Prostate gland (tissue), 2 donors: ENCODE measurements at regions of chr11 and their contacts with region 1.

Region 1: DNA sequence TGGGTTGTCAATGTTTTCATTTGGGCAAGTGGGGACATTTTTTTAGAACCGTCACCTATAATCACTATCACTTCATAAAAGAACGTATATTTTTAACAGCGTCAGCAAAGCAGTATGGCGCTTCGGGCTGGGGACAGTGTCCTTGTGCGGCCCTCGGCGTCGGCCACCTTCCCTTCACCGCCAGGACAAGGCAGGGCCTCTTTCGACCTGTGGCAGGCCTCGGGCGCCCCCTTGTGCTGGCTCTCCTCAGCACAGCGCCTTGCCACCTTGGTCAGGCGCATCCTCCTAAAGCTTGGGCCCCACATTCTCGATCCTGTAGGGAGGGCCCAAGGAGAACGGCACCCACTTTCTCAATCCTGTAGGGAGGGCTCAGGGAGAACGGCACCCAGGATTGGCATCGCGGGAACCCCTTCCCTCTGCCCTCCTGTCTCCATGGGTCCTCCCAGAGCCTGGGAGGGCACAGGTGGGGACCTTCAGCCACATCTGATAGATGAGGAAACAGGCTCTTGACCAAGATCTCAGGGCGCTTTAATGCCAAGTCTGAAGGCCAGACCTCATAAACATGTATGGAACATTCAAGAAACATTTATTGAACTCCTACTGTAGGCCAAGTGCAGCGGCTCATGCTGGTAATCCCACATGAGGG is 11.5 kb upstream of the FADD start:
- DNase-seq: peak; percentile 73
- H3K4me3 ChIP-seq: no peak overlapping the region
- H3K27ac ChIP-seq: no peak overlapping the region
- H3K4me1 ChIP-seq: no peaks in the 10 kb centered on the region
- H3K27me3 ChIP-seq: no peaks in the 10 kb centered on the region
- CTCF ChIP-seq: peak; percentile 77 to 97 (median 93)
- POLR2A ChIP-seq: no peak

Region 2: DNA sequence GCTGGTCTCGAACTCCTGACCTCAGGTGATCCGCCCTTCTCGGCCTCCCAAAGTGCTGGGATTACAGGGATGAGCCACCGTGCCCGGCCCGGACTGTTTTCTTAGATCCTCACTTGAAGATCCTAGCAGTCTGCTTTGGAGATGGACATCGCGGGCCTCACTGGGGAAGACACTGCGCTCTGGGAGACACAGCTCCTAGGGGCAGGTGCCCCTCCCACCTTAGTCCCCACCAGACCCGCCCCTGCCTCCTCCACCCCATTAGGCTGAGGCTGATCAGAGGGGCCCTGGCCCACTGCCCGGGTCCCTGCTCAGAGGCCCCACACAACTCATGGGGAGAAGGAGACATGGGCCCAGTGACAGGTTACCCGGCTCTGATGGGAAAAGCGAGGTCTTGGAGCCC is 505.2 kb before region 1 on chr11:
- intact Hi-C with region 1: loop called (anchors 5 kb)
- DNase-seq: no peak
- H3K4me3 ChIP-seq: no peak overlapping the region
- H3K27ac ChIP-seq: no peak overlapping the region
- H3K4me1 ChIP-seq: no peaks in the 10 kb centered on the region
- H3K27me3 ChIP-seq: no peaks in the 10 kb centered on the region
- CTCF ChIP-seq: no peak
- POLR2A ChIP-seq: no peak

Region 3: DNA sequence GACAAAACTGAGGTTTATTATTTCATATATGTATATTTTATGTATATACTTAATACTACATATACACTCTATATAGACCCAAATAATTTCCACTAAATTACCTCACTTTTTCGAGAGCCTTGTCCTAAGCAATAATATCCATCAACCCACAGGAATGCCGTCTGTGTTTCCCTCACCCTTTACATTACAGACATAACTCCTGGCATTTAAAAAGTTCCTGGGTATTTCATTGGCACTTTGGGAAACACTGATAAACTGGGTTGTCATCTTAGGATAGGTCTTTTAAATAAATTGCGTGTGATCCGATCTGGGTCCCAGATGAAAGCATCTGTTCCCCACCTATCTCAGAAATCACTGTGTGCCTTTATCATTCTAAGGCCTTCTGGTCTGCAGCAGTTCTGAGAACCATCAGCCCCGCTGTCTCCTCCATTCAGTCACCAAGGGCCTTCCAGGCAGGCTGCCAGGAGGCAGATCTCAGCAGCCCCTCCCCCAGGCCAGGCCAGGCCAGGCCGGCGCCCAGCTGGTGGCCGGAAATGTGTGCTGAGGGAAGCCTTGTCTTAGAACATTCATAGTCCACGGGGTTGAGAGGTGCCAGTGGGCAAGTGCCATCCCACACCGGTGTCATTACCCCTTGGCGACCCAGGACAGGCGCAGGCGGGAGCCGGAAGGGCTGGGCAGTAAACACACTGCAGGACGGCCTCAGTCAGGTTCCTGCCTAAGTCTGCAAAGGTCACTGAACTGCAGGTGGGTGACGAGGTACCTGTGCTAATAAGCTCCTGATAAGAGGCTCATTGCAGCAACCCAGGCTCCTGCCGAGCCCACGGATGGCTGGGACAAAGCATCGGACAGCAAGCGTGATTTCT is 491.1 kb before region 1 on chr11:
- intact Hi-C with region 1: loop called (anchors 5 kb)
- DNase-seq: no peak
- H3K4me3 ChIP-seq: no peak overlapping the region
- H3K27ac ChIP-seq: no peak overlapping the region
- H3K4me1 ChIP-seq: peaks cover 7% of the 10 kb centered on the region
- H3K27me3 ChIP-seq: peaks cover 36% of the 10 kb centered on the region
- CTCF ChIP-seq: no peak
- POLR2A ChIP-seq: no peak

Region 4: DNA sequence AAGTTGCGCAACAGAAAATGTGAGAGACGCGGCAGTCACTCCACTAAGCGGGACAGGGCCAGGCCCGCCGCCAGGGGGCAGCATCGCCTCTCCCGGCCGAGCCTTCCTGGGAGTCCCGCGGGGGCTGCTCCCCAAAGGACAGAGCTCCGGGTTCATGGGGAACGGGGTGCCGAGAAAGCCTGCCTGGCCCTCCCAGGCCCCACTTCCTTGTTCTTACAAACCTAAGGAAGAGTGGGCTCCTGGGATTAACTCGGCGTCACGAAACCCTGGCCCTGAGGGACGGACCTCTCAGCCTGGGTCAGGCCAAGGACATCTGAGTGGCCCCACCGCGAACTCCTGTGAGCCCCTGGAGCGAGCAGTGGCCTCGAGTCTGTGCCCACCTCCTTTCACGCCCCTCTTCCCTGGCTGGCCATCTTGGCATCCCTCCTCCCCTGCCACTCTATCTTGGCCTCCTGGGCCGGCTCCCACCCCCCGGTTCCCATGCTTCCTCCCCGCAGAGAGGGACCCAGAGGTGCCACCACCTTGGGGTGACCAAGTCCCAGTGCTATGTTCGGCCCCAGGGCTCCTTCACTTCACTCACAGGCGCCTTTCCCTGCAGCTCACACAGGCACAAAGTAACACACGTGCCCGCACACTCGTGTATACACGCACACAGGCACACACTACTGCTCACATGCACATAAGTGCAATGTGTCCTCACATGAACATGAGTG is 272.5 kb before region 1 on chr11:
- intact Hi-C with region 1: loop called (anchors 2 kb)
- DNase-seq: peak; percentile 58
- H3K4me3 ChIP-seq: no peak overlapping the region
- H3K27ac ChIP-seq: no peak overlapping the region
- H3K4me1 ChIP-seq: no peaks in the 10 kb centered on the region
- H3K27me3 ChIP-seq: no peaks in the 10 kb centered on the region
- CTCF ChIP-seq: peak; percentile 90 to 95 (median 93)
- POLR2A ChIP-seq: no peak

Region 5: DNA sequence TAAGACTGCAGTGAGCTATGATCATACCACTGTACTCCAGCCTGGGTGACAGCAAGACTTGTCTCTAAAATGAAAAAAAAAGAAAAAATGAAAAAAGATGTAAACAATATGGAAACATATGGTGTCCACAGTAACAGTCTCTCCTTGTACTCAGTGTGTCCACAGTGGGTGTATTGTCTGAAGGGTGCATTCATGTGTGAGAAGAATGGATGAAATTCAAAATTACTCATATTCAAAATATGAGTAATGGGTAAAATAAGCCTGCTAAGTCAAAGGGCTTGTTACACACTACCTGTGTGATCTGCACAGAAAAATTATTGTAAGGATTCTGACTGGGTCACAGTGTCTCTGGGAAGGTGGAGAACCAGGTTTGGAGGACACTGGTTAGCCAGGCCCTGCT is 105.7 kb after region 1 on chr11:
- intact Hi-C with region 1: no loop called
- DNase-seq: no peak
- H3K4me3 ChIP-seq: no peak overlapping the region
- H3K27ac ChIP-seq: no peak overlapping the region
- H3K4me1 ChIP-seq: no peaks in the 10 kb centered on the region
- H3K27me3 ChIP-seq: no peaks in the 10 kb centered on the region
- CTCF ChIP-seq: no peak
- POLR2A ChIP-seq: no peak

Region 6: DNA sequence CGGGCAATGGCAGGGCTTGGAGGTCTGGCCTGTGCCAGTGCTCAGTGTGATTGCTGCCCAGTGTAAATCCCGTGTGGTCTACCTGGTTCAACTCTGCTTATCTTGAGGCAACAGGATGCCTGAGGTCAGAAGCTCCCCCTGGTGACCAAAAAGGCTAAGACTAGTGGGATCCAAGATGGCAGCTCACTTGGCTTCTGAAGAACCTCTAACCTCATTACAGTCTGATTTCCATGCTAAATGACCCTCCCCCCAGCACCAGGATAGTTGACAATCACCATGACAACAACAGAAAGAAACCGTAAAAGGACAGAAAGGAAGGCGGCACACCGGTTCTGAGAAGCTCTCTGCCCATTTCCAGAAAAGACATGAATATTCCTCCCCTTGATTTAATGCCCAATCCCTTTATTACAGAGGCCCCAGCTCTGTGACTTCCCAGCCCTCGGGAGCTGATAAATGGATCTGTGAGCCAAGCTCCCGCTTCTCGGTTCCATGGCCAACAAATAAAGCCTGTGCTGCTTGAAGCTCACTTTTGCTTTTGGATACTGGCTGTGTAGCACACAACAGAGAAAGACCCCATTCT is 605.1 kb after region 1 on chr11:
- intact Hi-C with region 1: no loop called
- DNase-seq: no peak
- H3K4me3 ChIP-seq: no peak overlapping the region
- H3K27ac ChIP-seq: no peak overlapping the region
- H3K4me1 ChIP-seq: no peaks in the 10 kb centered on the region
- H3K27me3 ChIP-seq: no peaks in the 10 kb centered on the region
- CTCF ChIP-seq: no peak
- POLR2A ChIP-seq: no peak

Region 7: DNA sequence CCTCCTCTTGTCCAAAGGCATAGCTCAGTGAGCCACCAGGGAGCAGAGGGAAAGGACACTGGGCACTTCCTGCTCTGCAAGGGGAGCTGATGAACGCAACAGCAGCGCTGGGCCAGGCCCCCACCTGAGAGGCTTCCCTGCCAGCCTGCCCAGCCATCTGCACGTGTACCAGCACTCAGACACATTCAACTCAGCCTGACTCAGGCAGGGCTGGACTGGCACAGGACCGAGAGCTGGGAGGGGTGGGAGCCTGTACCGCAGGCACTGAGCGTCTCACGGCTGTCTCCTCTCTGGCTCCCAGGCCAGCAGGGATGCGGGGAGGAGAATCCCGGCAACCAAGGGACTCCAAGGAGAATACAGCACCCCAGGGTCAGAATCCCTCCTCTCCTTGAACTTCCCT is 618.5 kb after region 1 on chr11:
- intact Hi-C with region 1: no loop called
- DNase-seq: no peak
- H3K4me3 ChIP-seq: no peak overlapping the region
- H3K27ac ChIP-seq: no peak overlapping the region
- H3K4me1 ChIP-seq: no peaks in the 10 kb centered on the region
- H3K27me3 ChIP-seq: no peaks in the 10 kb centered on the region
- CTCF ChIP-seq: no peak
- POLR2A ChIP-seq: no peak